ENCODE measurements at regions of chr19 and their contacts with region 1.

Region 1: GRCh38 chr19:8615813-8616596 is 5.5 kb upstream of the ADAMTS10 start:
- DNase-seq: peak; percentile 43
- H3K4me3 ChIP-seq: no peak overlapping the region
- H3K27ac ChIP-seq: no peak overlapping the region
- H3K4me1 ChIP-seq: no peaks in the 10 kb centered on the region
- H3K27me3 ChIP-seq: no peaks in the 10 kb centered on the region
- CTCF ChIP-seq: peak; percentile 88 to 91
- POLR2A ChIP-seq: no peak

Region 2: GRCh38 chr19:8513687-8514504 is 102.1 kb before region 1 on chr19 and contains the start of gene ZNF414:
- CTCF ChIA-PET with region 1: no interaction called
- POLR2A ChIA-PET with region 1: interaction called, 10 read pairs
- dilution Hi-C with region 1: no loop called
- intact Hi-C with region 1: no loop called
- DNase-seq: peak; percentile 93
- H3K4me3 ChIP-seq: peak within 1 kb of the TSS; percentile 47 to 95 (median 62)
- H3K27ac ChIP-seq: peak within 1 kb of the TSS; percentile 96
- H3K4me1 ChIP-seq: peaks cover 11% of the 10 kb centered on the region
- H3K27me3 ChIP-seq: peaks cover 1 to 4% of the 10 kb centered on the region in 2 experiments
- CTCF ChIP-seq: no peak
- POLR2A ChIP-seq: peak; percentile 93
- total RNA-seq, gene ZNF414: 14.5 and 20.6 TPM in 2 replicates

Region 3: DNA sequence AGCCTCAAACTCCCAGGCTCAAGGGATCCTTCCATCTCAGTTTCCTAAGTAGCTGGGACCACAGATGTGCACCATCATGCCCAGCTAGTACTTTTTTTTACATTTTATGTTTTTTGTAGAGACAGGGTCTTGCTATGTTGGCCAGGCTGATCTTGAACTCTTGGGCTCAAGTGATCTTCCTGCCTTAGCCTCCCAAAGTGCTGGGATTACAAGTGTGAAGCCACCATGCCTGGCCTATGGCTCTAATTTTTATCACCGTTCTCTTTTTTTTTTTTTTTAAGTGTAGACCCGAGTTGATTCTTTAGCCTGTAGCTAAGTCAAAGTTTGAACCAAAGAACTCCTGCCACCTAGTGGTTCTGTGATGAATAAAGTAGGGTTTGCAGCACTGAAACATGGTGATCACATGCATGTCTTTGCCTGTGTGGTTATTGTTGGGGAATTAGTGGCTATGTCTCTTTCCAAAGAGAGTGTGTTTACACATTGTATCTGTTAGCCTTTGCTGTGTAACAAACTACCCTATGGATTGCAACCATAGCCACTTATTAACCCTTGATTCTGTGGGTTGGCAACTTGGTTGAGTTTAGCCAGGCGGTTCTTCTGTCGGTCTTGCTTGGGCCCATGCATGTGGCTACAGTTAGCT is 26.0 kb after region 1 on chr19:
- CTCF ChIA-PET with region 1: interaction called, 15 read pairs
- POLR2A ChIA-PET with region 1: no interaction called
- dilution Hi-C with region 1: no loop called
- intact Hi-C with region 1: loop called (anchors 1 kb)
- DNase-seq: peak; percentile 44
- H3K4me3 ChIP-seq: no peak overlapping the region
- H3K27ac ChIP-seq: no peak overlapping the region
- H3K4me1 ChIP-seq: no peaks in the 10 kb centered on the region
- H3K27me3 ChIP-seq: no peaks in the 10 kb centered on the region
- CTCF ChIP-seq: peak; percentile 48 to 49
- POLR2A ChIP-seq: no peak